GM10248 (cell line): ENCODE measurements at regions of chr9 and their contacts with region 1.

Region 1: DNA sequence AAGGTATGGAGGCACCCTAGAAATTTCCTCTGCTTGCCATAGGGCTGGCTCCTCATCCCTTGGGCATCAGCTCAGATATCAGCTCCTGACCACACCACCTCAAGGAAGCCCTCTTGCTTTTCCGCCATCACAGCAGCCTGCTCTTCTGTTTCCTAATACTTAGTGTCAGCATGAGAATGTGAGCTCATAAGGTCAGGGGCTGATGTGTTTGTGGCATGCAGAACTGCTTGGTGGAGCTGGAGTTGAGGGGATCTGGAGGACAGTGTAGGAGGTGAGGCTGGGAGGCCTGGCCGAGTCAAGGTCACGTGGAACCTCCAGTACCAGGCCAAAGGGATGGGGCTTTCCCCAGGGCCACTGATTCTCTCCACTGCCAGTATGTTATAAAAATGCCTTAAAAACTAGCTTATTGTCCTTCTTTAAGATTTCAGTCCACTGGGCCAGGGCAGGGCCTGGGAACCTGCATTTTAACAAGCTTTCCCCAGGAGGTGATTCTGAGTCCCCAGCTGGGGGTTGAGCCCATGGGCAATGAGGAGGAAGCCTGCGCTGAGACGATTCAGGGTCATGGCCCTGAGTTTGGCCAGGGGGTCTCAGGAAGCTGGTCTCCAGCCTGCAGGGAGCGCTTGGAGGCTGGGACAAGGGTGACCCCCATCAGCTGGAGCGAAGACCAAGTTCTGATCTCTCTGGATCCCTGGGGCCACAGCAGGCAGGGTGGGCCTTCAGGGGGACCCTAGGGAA is 28.6 kb downstream of the DAB2IP start:
- DNase-seq: no peak
- CTCF ChIP-seq: no peak

Region 2: DNA sequence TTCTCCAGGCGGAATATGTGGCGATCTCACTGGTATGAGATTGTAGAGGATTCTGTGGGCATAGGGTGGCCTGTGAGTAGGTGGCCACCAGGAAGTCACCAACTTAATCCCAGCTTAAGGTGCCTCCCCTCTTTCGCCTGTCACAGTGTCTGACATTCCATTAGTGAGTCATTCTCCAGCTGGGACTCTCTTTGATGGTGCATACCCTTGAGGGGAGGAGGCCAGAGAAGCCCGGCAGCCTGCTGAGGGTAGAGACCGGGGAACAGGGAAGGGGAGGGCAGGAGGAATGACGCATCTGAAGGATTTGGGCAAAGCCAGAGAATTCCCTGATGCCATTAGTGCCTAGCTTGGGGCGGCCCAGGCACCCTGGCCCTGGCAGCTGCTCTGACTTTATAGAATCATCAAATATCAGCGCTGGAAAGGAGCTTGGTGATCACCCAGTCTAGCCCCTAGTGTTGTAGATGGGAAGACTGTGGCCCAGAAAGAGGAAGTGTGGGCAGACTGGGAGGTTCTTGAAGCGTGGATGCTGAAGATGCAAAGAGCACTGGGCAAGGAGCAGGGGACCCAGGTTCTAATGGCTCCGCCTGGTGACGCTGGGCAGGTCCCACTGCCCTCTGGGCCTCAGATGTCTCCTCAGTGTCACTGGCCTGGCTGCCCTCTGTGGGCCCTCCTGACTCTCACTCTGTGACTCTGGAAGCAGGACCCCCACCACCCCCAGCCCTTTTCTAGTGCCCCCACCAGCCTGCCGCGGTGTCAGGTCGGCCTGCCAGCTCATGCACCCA is 12.7 kb after region 1 on chr9:
- CTCF ChIA-PET with region 1: interaction called, 13 read pairs
- POLR2A ChIA-PET with region 1: no interaction called
- DNase-seq: no peak
- CTCF ChIP-seq: no peak